Activated CD8-positive, alpha-beta T cell treated with anti-CD3 and anti-CD28 coated beads for 36 hours (primary cell): ENCODE measurements at regions of chr4 and their contacts with region 1.

Region 1: DNA sequence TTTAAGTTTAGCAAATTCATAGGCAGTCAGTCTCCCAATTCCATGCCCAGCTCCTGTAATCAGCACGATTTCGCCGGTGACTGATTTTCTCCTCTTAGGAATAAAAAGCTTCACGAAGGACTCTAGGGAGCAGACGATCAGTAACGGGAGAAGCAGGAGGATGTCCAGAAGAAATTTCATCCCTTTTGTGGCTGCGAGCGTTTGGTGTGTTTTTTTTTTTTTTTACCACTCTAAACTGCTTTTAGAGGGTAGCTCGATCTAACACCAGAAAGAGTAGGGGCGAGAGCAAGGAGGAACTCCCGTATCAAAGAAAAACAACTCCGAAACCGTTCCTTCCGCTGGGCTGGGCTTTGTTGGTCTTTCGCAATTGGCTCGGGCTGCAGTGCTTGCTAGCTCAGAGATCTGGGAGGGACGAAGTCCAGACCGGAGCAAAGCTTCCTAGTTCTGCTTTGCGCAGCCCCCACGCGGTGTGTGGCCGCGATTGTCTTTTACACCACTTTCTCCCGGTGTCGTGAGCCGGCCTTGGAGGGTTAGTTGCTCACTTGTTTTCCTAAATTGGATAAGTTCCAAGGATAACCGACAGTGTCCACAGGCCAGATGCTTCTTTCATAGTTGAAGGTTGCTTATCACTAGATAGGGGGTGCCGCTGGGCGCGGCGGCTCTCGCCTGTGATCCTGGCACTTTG is at the start of gene HSD17B11:
- DNase-seq: peak; percentile 89
- ATAC-seq: peak; percentile 96
- H3K4me3 Mint-ChIP-seq: peak within 1 kb of the TSS; percentile 87
- H3K27ac Mint-ChIP-seq: peak within 1 kb of the TSS; percentile 89
- H3K4me1 Mint-ChIP-seq: peaks cover 47% of the 10 kb centered on the region
- H3K27me3 Mint-ChIP-seq: no peaks in the 10 kb centered on the region
- CTCF ChIP-seq: no peak
- total RNA-seq, gene HSD17B11: 21.2 to 21.7 TPM

Region 2: GRCh38 chr4:86831262-86832130 is 559.5 kb before region 1 on chr4:
- CTCF ChIA-PET with region 1: no interaction called
- POLR2A ChIA-PET with region 1: no interaction called
- intact Hi-C with region 1: no loop called
- DNase-seq: no peak
- ATAC-seq: no peak
- H3K4me3 Mint-ChIP-seq: no peak overlapping the region
- H3K27ac Mint-ChIP-seq: no peak overlapping the region
- H3K4me1 Mint-ChIP-seq: no peaks in the 10 kb centered on the region
- H3K27me3 Mint-ChIP-seq: no peaks in the 10 kb centered on the region
- CTCF ChIP-seq: no peak

Region 3: DNA sequence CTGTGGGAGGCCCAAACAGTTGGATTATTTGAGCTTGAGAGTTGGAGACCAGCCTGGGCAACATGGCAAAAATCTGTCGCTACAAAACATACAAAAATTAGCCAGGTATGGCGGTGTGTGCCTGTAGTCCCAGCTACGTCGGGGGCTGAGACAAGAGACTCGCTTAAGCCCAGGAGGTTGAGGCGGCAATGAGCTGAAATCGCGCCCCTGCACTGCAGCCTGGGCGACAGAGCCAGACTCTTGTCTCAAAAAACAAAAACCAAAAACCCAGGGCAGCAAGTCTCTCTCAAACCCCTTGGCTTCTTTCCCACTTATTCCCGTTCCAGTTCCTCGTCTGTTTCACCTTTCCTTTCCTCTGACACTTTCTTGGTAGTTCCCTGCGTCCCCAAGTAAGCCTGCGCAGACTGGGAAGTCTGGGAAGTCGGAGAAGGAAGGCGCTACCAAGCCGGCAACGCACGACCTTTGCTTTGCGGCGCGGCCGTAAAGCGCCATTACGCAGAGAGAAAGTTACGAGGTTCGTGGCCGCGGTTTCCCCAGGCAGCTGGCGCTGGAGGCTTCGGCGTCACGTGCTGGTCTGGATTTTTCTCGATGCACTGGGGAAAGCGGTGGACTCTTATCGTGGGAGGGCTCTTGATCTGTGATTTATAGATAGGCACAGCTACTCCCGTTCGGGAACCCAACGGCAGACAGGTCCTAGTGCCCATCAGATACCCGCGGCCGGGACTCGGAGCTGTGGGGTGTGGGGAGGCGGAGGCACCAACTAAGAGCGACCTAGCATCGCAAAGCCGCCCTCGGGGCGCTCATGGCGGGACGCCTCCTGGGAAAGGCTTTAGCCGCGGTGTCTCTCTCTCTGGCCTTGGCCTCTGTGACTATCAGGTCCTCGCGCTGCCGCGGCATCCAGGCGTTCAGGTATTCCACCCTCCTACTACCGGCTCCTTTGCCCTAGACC is 31.3 kb after region 1 on chr4 and contains the start of gene NUDT9:
- CTCF ChIA-PET with region 1: interaction called, 14 read pairs
- POLR2A ChIA-PET with region 1: interaction called, 22 read pairs
- intact Hi-C with region 1: loop called (anchors 2 kb)
- DNase-seq: peak; percentile 94
- ATAC-seq: peak; percentile 91
- H3K4me3 Mint-ChIP-seq: peak within 1 kb of the TSS; percentile 92
- H3K27ac Mint-ChIP-seq: peak within 1 kb of the TSS; percentile 98
- H3K4me1 Mint-ChIP-seq: peaks cover 29% of the 10 kb centered on the region
- H3K27me3 Mint-ChIP-seq: no peaks in the 10 kb centered on the region
- CTCF ChIP-seq: no peak
- total RNA-seq, gene NUDT9: 11.9 to 12.3 TPM